ENCODE measurements at regions of chr7 and their contacts with region 1.

Region 1: GRCh38 chr7:18352339-18353255 is 143.0 kb upstream of the HDAC9 start:
- H3K4me3 Mint-ChIP-seq: no peak overlapping the region
- H3K27ac Mint-ChIP-seq: no peak overlapping the region
- H3K4me1 Mint-ChIP-seq: peaks cover 20% of the 10 kb centered on the region
- H3K27me3 Mint-ChIP-seq: no peaks in the 10 kb centered on the region

Region 2: DNA sequence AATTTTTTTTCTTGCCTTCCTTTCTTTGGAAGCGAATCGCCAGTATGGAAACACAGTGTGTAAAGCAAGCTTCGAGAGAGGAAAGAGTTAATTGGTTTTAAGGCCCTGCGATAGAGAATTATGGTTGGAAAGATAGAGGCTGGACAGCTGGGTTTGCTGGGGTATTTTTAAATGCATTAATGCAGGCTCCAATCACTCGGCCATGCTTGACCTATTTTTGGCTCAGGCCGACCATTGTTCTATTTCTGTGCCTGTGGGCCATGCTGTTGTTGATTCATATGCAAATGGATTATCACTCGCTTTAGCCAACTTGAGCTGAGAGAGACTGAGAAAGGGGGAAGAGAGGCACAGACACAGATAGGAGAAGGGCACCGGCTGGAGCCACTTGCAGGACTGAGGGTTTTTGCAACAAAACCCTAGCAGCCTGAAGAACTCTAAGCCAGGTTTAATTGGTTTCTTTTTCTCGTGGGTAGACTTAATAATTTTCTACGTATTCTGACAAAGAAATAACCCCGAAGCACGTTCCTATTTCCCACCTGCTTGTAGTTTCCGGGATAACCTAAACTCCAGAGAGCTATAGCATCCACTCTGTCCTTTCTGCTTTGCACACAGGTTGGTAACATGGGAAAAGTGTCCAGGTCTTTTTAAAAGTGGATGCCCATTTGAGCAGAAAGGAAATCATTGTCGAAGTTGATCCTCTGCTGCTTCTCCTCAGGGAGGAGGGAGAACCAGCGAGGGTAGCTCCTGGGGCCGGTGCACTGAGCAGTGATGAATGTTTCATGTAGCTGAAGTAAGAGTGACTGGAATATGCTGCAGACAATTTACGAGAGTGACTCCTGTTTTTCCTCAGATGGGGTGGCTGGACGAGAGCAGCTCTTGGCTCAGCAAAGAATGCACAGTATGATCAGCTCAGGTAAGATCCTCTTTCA is 143.1 kb after region 1 on chr7 and contains the start of gene HDAC9:
- intact Hi-C with region 1: loop called (anchors 10 kb)
- H3K4me3 Mint-ChIP-seq: peak within 1 kb of the TSS; percentile 72
- H3K27ac Mint-ChIP-seq: peak within 1 kb of the TSS; percentile 68
- H3K4me1 Mint-ChIP-seq: peaks cover 32% of the 10 kb centered on the region
- H3K27me3 Mint-ChIP-seq: peaks cover 2% of the 10 kb centered on the region

Region 3: DNA sequence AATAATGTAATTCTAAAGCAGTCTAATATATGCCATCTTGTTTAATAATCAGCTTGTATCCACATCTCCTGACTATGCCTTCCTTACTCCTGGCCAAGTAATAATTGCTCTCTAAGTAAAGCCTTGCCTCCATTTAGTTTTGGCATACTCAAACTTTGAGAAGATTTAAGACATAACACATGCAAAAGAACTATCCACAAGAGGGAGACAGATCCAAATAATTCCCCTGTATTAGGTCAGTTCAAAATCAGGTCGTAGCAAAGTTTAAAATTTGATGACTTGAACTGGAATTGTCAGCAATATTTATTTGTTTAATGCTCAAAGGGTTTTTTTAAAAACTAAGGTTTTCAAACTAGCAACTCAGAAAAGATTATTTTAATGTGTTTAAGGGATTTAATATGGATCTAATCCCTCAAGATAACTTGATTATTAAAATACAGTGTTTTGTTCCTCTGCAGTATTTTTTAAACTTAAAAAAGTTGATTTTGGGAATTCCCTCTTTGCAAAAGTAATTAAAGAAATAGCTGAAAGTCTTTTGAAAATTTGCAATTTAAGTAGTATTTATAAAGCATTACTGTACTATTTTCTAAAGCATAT is 238.2 kb after region 1 on chr7:
- intact Hi-C with region 1: loop called (anchors 5 kb)
- H3K4me3 Mint-ChIP-seq: no peak overlapping the region
- H3K27ac Mint-ChIP-seq: no peak overlapping the region
- H3K4me1 Mint-ChIP-seq: peaks cover 19% of the 10 kb centered on the region
- H3K27me3 Mint-ChIP-seq: no peaks in the 10 kb centered on the region

Region 4: GRCh38 chr7:19051767-19052375 is 699.3 kb after region 1 on chr7:
- intact Hi-C with region 1: loop called (anchors 2 kb)
- H3K4me3 Mint-ChIP-seq: no peak overlapping the region
- H3K27ac Mint-ChIP-seq: no peak overlapping the region
- H3K4me1 Mint-ChIP-seq: no peaks in the 10 kb centered on the region
- H3K27me3 Mint-ChIP-seq: no peaks in the 10 kb centered on the region

Region 5: DNA sequence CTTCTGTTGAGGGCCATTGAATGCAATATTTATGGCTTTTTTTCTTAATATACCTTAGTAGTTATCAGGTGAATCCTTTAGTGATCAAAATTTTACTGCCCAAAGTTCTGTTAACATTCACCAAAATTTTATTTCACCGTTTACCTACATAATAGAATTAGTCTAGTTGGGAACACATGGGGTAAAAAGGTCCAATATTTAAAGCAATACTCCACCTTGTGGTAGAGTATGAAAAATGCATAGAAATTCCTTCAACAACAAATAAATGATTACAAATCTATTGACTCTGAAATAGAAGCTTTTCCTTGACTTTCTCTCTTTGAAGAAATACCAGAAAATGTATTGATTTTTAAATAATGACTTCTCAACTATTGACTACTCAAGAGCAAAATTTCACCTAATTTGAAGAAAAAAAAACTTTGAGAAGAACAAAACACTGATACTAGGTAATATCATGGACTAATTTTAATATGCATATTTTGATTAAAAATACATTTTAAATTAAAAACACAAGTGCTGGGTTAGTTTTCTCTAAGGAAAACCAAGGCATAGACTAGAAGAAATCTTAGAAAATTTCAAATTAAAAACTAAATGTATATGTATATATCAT is 1312.9 kb after region 1 on chr7:
- intact Hi-C with region 1: loop called (anchors 5 kb)
- H3K4me3 Mint-ChIP-seq: no peak overlapping the region
- H3K27ac Mint-ChIP-seq: no peak overlapping the region
- H3K4me1 Mint-ChIP-seq: no peaks in the 10 kb centered on the region
- H3K27me3 Mint-ChIP-seq: no peaks in the 10 kb centered on the region

Measured in dendritic cell treated with granulocyte-macrophage colony-stimulating factor and Interleukin-4, amounts not matched to agents 40 ng/mL and 50 ng/mL, for 4 days (primary cell).